Stomach (tissue), 19 donors: ENCODE measurements at regions of chr6 and their contacts with region 1.

Region 1: DNA sequence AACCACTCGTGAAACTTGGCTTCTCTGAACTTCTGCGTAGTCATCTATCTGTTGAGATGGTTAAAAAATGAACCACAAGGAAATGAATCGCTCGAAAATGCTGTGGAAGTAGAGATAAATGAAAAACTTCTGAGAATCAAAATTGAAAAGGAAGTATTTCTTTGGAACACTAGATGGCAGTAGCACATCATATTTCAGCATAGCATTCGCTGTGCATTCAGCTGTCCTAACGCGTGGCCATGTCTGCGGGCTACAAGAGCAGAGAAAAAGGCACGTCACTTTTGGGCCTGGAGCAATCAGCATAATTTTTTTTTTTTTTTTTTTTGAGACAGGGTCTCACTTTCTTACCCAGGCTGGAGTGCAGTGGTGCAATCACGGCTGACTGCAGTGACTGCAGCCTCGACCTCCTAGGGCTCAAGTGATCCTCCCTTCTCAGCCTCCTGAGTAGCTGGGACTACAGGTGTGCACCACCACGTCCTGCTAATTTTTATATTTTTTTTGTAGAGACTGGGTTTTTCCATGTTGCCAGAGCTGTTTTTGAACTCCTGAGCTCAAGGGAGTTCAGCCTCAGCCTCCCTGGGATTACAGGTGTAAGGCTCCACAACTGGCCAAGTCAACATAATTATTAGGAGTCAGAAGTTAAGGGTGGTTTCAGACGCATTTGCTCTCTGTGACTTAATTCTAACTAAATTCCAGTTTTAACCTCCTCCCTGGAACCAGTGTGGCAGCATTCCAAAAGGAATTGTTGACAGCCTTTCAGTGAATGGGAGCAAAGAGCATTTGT is 8.8 kb upstream of the PERP start:
- DNase-seq: peak; percentile 64 to 91
- H3K4me3 ChIP-seq: no peak overlapping the region
- H3K27ac ChIP-seq: no peak overlapping the region
- H3K4me1 ChIP-seq: peaks cover 0 to 5% (median 0%) of the 10 kb centered on the region in 4 donors
- H3K27me3 ChIP-seq: peaks cover 0 to 6% (median 0%) of the 10 kb centered on the region in 3 donors
- CTCF ChIP-seq: peak in 5 of 7 experiments; percentile 38 to 82 (median 68)
- EP300 ChIP-seq: no peak
- POLR2A ChIP-seq: no peak

Region 2: GRCh38 chr6:138001750-138002349 is 114.2 kb before region 1 on chr6:
- intact Hi-C with region 1: loop called (anchors 5 kb)
- DNase-seq: peak; percentile 71 to 84
- H3K4me3 ChIP-seq: no peak overlapping the region
- H3K27ac ChIP-seq: no peak overlapping the region
- H3K4me1 ChIP-seq: peaks cover 0 to 2% (median under 1%) of the 10 kb centered on the region in 4 donors
- H3K27me3 ChIP-seq: no peaks in the 10 kb centered on the region
- CTCF ChIP-seq: peak in 5 of 7 experiments; percentile 67 to 85 (median 78)
- EP300 ChIP-seq: no peak
- POLR2A ChIP-seq: no peak

Region 3: GRCh38 chr6:138287144-138287955 is 171.3 kb after region 1 on chr6:
- intact Hi-C with region 1: loop called (anchors 10 kb)
- DNase-seq: peak; percentile 80 to 84
- H3K4me3 ChIP-seq: no peak overlapping the region
- H3K27ac ChIP-seq: no peak overlapping the region
- H3K4me1 ChIP-seq: peaks cover 0 to 6% (median 0%) of the 10 kb centered on the region in 4 donors
- H3K27me3 ChIP-seq: no peaks in the 10 kb centered on the region
- CTCF ChIP-seq: peak in 5 of 7 experiments; percentile 45 to 89 (median 64)
- EP300 ChIP-seq: no peak
- POLR2A ChIP-seq: no peak

Region 4: DNA sequence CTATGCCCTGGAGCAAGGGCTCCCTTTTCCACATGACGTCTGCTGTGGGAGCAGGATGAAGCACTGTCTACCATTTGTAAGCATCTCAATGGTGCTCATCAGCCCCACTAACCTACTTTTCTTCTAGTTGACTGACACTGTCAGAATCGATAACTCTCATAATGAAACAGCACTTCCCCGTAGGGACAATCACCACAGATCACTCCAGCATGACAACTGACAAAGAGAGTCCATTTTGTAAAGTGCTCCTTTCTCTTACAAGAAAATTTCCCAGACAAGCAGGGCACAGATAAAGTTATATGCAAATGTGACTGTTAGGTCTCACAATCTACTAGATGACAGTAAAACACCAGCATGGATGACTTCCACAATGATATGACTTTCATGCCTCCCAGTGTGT is 334.4 kb after region 1 on chr6:
- intact Hi-C with region 1: no loop called
- DNase-seq: no peak
- H3K4me3 ChIP-seq: no peak overlapping the region
- H3K27ac ChIP-seq: no peak overlapping the region
- H3K4me1 ChIP-seq: peaks cover 0 to 11% (median 8%) of the 10 kb centered on the region in 4 donors
- H3K27me3 ChIP-seq: no peaks in the 10 kb centered on the region
- CTCF ChIP-seq: no peak
- EP300 ChIP-seq: no peak
- POLR2A ChIP-seq: no peak